Dendritic cell treated with granulocyte-macrophage colony-stimulating factor and Interleukin-4, amounts not matched to agents 40 ng/mL and 50 ng/mL, for 4 days (primary cell): ENCODE measurements at regions of chr11 and their contacts with region 1.

Region 1: DNA sequence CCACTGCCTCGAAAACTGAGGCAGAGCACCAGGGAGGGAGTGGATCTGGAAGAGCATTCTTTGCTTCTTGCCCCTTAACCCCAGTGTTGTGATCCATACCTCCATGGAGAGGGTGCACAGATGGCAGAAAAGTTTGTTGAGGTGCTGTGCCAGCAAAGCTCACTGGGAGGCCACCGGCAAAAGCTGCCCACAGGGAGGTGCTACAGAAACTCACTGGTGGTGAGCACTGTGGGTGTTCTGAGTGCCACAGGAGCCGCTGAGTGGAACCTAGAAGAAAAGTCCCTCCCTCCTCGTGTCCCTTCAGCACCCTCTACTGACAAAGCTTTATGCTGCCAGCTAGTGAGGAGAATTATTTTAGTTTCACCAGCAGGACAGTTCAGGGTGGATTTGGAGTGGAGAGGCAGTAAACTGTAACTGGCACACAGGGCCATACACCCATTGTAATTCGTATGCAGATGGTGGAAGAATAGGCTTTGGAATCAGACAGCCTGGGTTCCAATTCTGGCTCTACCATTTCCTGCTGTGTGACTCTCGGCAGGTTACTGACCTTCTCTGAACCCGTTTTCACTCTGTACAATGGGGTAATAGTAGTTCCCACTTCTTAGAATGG is 84.6 kb downstream of the SWAP70 start:
- H3K4me3 Mint-ChIP-seq: no peak overlapping the region
- H3K27ac Mint-ChIP-seq: no peak overlapping the region
- H3K4me1 Mint-ChIP-seq: peaks cover 35% of the 10 kb centered on the region
- H3K27me3 Mint-ChIP-seq: no peaks in the 10 kb centered on the region

Region 2: GRCh38 chr11:9516113-9516512 is 232.4 kb before region 1 on chr11:
- intact Hi-C with region 1: no loop called
- H3K4me3 Mint-ChIP-seq: no peak overlapping the region
- H3K27ac Mint-ChIP-seq: no peak overlapping the region
- H3K4me1 Mint-ChIP-seq: peaks cover 18% of the 10 kb centered on the region
- H3K27me3 Mint-ChIP-seq: no peaks in the 10 kb centered on the region

Region 3: GRCh38 chr11:9534791-9535781 is 213.4 kb before region 1 on chr11:
- intact Hi-C with region 1: loop called (anchors 5 kb)
- H3K4me3 Mint-ChIP-seq: no peak overlapping the region
- H3K27ac Mint-ChIP-seq: no peak overlapping the region
- H3K4me1 Mint-ChIP-seq: no peaks in the 10 kb centered on the region
- H3K27me3 Mint-ChIP-seq: no peaks in the 10 kb centered on the region

Region 4: GRCh38 chr11:9663699-9664275 is 84.7 kb before region 1 on chr11 and contains the start of gene SWAP70:
- intact Hi-C with region 1: loop called (anchors 5 kb)
- H3K4me3 Mint-ChIP-seq: peak within 1 kb of the TSS; percentile 99
- H3K27ac Mint-ChIP-seq: peak within 1 kb of the TSS; percentile 94
- H3K4me1 Mint-ChIP-seq: peaks cover 70% of the 10 kb centered on the region
- H3K27me3 Mint-ChIP-seq: no peaks in the 10 kb centered on the region

Region 5: GRCh38 chr11:9703280-9703679 is 45.2 kb before region 1 on chr11:
- intact Hi-C with region 1: loop called (anchors 5 kb)
- H3K4me3 Mint-ChIP-seq: no peak overlapping the region
- H3K27ac Mint-ChIP-seq: peak overlapping the region; percentile 58
- H3K4me1 Mint-ChIP-seq: peaks cover 34% of the 10 kb centered on the region
- H3K27me3 Mint-ChIP-seq: no peaks in the 10 kb centered on the region